ENCODE measurements at regions of chr3 and their contacts with region 1.

Region 1: GRCh38 chr3:196518966-196519717 is 4.0 kb upstream of the SMCO1 start:
- DNase-seq: no peak
- H3K4me3 ChIP-seq: no peak overlapping the region
- H3K27me3 ChIP-seq: no peaks in the 10 kb centered on the region; the same call in 1 of the 2 replicates
- CTCF ChIP-seq: peak; percentile 44

Region 2: DNA sequence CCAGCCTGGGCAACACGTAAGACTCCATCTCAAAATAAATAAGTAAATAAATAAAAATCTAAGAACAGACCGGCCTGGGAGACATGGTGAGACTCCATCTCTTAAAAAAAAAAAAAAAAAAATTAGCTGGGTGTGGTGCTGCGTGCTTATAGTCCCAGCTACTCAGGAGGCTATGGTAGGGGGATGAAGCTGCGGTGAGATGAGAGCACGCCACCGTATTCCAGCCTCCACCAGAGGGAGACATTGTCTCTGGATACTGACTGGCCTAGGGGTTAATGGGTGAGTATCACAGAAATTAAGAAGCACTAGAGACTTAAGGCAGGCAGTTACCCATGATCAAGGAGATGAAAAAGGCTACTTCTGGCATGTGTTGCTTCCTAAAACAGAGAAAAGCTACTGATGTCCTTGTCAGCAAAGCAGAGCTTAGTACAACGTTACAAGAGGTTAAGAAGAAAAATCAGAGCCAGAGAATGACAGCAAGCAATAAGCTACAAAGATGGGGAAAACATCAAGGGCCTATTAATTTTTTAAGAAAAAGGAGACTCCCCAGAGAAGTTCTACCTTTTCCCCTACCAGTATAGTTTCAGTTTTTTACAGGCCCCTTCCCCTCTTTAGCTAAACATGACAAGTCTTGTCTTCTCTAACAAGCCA is 445.8 kb before region 1 on chr3:
- CTCF ChIA-PET with region 1: interaction called, 12 read pairs
- POLR2A ChIA-PET with region 1: no interaction called
- DNase-seq: no peak
- H3K4me3 ChIP-seq: no peak overlapping the region
- H3K27me3 ChIP-seq: no peaks in the 10 kb centered on the region
- CTCF ChIP-seq: peak; percentile 82

Region 3: GRCh38 chr3:196202516-196202970 is 316.6 kb before region 1 on chr3:
- CTCF ChIA-PET with region 1: no interaction called
- POLR2A ChIA-PET with region 1: interaction called, 14 read pairs
- DNase-seq: no peak
- H3K4me3 ChIP-seq: no peak overlapping the region
- H3K27me3 ChIP-seq: peaks cover 5% of the 10 kb centered on the region
- CTCF ChIP-seq: no peak

Region 4: GRCh38 chr3:196251918-196252317 is 267.2 kb before region 1 on chr3:
- CTCF ChIA-PET with region 1: interaction called, 42 read pairs
- POLR2A ChIA-PET with region 1: no interaction called
- DNase-seq: no peak
- H3K4me3 ChIP-seq: no peak overlapping the region
- H3K27me3 ChIP-seq: no peaks in the 10 kb centered on the region
- CTCF ChIP-seq: no peak

Region 5: DNA sequence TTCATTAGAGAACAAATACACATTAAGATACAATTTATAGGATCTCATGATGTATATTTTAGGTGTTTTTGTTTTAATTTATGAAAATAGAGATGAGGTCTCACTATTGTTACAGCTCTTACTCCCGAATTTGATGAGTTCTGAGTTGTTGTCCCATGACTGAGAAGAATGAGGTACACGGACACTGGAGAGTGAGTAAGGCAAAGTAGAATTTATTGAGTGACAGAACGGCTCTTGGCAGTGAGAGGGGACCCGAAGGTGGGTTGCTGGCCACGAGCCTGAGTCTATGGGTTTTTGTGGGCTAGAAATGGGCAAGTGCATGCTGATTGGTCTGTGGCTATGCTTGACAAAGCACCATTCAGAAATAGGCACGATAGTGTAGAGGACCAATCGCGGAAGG is 12.5 kb before region 1 on chr3:
- CTCF ChIA-PET with region 1: interaction called, 11 read pairs
- POLR2A ChIA-PET with region 1: no interaction called
- DNase-seq: no peak
- H3K4me3 ChIP-seq: no peak overlapping the region
- H3K27me3 ChIP-seq: no peaks in the 10 kb centered on the region
- CTCF ChIP-seq: no peak

Measured in BJ (cell line).